OCI-LY7 (cell line): ENCODE measurements at regions of chr6 and their contacts with region 1.

Region 1: DNA sequence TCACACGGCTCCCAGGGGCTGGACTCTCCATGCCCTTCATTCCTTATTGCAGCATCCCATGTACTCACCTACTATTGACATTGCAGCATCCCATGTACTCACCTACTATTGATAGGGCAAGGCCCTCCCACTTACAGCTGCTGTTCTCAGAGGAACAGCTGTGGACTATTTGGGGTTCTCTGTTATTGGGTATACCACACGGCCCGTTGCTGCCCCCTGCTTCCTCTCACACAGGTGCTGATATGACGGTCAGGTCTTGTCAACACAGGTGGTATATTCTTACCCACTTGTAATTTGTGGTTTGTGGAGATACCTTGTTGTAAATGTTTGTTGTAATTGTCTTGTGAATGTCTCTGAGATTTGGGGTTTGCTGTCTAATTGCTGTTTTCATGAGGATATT is 18.8 kb downstream of the ALDH5A1 start:
- DNase-seq: peak; percentile 93
- H3K4me3 ChIP-seq: peak overlapping the region; percentile 24
- H3K27ac ChIP-seq: peak overlapping the region; percentile 83
- H3K4me1 ChIP-seq: peaks cover 77% of the 10 kb centered on the region
- CTCF ChIP-seq: peak; percentile 60; the same call in 1 of the 2 replicates

Region 2: GRCh38 chr6:24501914-24502313 is 11.7 kb before region 1 on chr6:
- CTCF ChIA-PET with region 1: interaction called, 15 read pairs
- POLR2A ChIA-PET with region 1: interaction called, 586 read pairs
- intact Hi-C with region 1: loop called (anchors 1 kb)
- DNase-seq: no peak
- H3K4me3 ChIP-seq: no peak overlapping the region
- H3K27ac ChIP-seq: no peak overlapping the region
- H3K4me1 ChIP-seq: peaks cover 53% of the 10 kb centered on the region
- CTCF ChIP-seq: no peak